ENCODE measurements at regions of chr11 and their contacts with region 1.

Region 1: GRCh38 chr11:12900496-12900895 is 108.6 kb upstream of the RASSF10 start:
- DNase-seq: peak; percentile 89
- ATAC-seq: peak; percentile 36
- H3K4me3 ChIP-seq: no peak overlapping the region
- H3K27ac ChIP-seq: peak overlapping the region; percentile 84
- H3K4me1 ChIP-seq: peaks cover 45% of the 10 kb centered on the region
- H3K27me3 ChIP-seq: no peaks in the 10 kb centered on the region
- CTCF ChIP-seq: no peak

Region 2: GRCh38 chr11:12411806-12412727 is 488.4 kb before region 1 on chr11:
- CTCF ChIA-PET with region 1: no interaction called
- POLR2A ChIA-PET with region 1: no interaction called
- intact Hi-C with region 1: loop called (anchors 5 kb)
- DNase-seq: peak; percentile 79
- ATAC-seq: peak; percentile 87
- H3K4me3 ChIP-seq: no peak overlapping the region
- H3K27ac ChIP-seq: peak overlapping the region; percentile 6
- H3K4me1 ChIP-seq: peaks cover 14% of the 10 kb centered on the region
- H3K27me3 ChIP-seq: no peaks in the 10 kb centered on the region
- CTCF ChIP-seq: peak; percentile 84

Region 3: GRCh38 chr11:12827929-12828812 is 72.3 kb before region 1 on chr11:
- CTCF ChIA-PET with region 1: no interaction called
- POLR2A ChIA-PET with region 1: no interaction called
- intact Hi-C with region 1: no loop called
- DNase-seq: peak; percentile 69
- ATAC-seq: peak; percentile 77
- H3K4me3 ChIP-seq: peak overlapping the region; percentile 74
- H3K27ac ChIP-seq: peak overlapping the region; percentile 68
- H3K4me1 ChIP-seq: peaks cover 37% of the 10 kb centered on the region
- H3K27me3 ChIP-seq: no peaks in the 10 kb centered on the region
- CTCF ChIP-seq: no peak

Region 4: DNA sequence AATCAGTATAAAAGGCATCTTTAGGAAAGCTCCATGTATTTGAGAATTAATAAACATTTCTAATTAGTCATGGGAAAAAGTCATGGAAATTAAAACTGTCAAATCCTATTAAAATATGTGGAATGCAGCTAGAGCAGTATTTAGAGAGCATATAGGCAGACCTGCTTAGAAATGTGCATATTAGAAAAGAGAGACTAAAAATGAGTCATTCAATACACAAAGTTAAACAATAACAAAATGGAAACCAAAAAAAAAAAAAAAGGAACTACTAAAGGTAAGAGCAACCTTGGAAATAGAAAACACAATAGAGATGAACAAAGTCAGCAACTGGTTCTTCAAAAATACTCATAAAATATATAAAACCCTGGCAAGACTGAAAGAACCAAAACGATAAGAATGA is 49.0 kb after region 1 on chr11:
- CTCF ChIA-PET with region 1: no interaction called
- POLR2A ChIA-PET with region 1: no interaction called
- intact Hi-C with region 1: loop called (anchors 2 kb)
- DNase-seq: peak; percentile 45
- ATAC-seq: peak; percentile 78
- H3K4me3 ChIP-seq: no peak overlapping the region
- H3K27ac ChIP-seq: no peak overlapping the region
- H3K4me1 ChIP-seq: peaks cover 11% of the 10 kb centered on the region
- H3K27me3 ChIP-seq: no peaks in the 10 kb centered on the region
- CTCF ChIP-seq: no peak